ENCODE measurements at regions of chr6 and their contacts with region 1.

Region 1: DNA sequence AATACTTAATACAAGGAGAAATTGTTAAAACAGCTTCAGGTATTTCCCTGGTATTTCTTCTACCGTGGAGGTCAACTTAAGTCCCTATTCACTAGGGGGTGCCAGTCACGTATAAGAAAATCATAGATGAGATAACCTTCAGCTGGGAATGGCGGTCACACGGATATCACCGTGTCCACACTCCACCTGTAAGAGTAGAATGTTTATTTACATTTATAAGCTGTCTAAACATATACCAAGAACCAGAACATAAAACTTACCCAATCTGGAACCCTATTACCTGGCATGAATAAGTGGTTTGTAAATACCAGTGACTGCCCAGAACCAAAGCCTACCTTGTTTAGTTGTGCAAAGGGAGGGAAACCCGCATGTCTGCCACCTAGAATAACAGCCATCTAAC is 1.9 kb upstream of the ELOVL4 start:
- DNase-seq: peak in 29 of 35 experiments; percentile 16 to 88 (median 41)
- ATAC-seq: peak in 2 of 4 experiments; percentile 21 to 34
- H3K4me3 ChIP-seq: no peak overlapping the region
- H3K4me3 Mint-ChIP-seq: no peak overlapping the region
- H3K27ac ChIP-seq: no peak overlapping the region
- H3K27ac Mint-ChIP-seq: peak overlapping the region; percentile 23 to 43
- H3K4me1 ChIP-seq: peaks cover 6 to 14% of the 10 kb centered on the region in 2 experiments
- H3K4me1 Mint-ChIP-seq: peaks cover 13 to 30% (median 25%) of the 10 kb centered on the region in 3 donors
- H3K27me3 ChIP-seq: peaks cover 0 to 13% of the 10 kb centered on the region in 2 experiments
- H3K27me3 Mint-ChIP-seq: peaks cover 5 to 33% of the 10 kb centered on the region in 2 donors

Region 2: DNA sequence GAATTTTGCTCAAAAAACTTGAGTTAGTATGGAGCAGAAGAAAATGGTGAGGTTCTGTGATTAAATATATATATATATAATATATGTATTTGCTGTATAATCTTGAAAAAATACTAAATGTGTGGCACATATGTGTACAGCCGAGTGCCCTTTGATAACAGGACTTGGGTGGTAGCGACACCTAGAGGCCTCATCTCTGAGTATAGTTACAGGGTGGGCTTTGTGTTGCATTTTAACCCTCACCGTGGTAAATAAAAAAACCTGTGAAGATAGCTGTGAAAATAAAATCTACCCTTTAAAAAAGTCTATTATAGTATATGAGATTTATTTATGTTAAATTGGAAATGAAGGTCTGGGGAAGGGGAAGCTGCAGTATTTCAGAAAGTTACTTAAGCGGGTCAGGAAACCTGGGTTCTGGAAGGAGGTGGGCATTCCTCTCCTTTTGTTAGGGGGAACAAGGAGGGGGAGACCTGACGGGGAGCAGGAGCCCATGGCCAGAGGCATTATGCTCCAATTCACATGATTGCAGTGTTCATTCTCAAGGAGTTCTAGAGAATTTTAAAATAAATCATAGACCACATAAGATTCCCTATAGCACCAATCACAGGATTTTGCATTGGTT is 235.4 kb before region 1 on chr6:
- CTCF ChIA-PET with region 1: no interaction called
- POLR2A ChIA-PET with region 1: no interaction called
- DNase-seq: peak in 31 of 35 experiments; percentile 2 to 67 (median 37)
- ATAC-seq: peak in 3 of 4 experiments; percentile 53 to 69 (median 67)
- H3K4me3 ChIP-seq: no peak overlapping the region
- H3K4me3 Mint-ChIP-seq: no peak overlapping the region
- H3K27ac ChIP-seq: no peak overlapping the region
- H3K27ac Mint-ChIP-seq: no peak overlapping the region
- H3K4me1 ChIP-seq: no peaks in the 10 kb centered on the region
- H3K4me1 Mint-ChIP-seq: peaks cover 0 to 7% (median 0%) of the 10 kb centered on the region in 3 donors
- H3K27me3 ChIP-seq: peaks cover 0 to 6% of the 10 kb centered on the region in 2 experiments
- H3K27me3 Mint-ChIP-seq: peaks cover 0 to 5% of the 10 kb centered on the region in 2 donors

Region 3: DNA sequence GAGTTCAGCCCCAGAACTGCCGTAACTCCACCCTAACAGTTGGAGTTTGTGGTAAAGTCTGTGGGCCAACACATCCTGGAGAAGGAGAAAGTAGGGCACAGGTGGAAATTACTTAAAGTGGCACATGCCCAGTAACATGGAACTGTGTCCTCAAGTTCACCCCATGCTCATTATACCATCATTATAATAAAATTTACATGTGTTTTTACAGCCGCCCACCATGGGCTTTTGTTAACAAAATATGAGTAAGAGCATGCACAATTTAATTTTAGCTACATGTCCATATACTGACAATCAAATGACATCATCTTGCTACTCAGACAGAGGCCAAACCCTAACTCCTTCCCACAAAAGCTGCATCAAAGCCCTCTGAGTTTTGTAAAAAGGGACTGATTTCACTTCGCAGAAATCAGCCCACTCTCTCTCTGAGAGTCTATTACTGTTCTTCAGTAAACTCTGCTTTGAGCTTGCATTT is 15.4 kb after region 1 on chr6:
- CTCF ChIA-PET with region 1: interaction called, 4 to 10 read pairs
- POLR2A ChIA-PET with region 1: interaction called in 1 of 2 experiments, 3 read pairs
- DNase-seq: peak in 6 of 35 experiments; percentile 1 to 43 (median 12)
- ATAC-seq: peak in 2 of 4 experiments; percentile 74 to 81
- H3K4me3 ChIP-seq: no peak overlapping the region
- H3K4me3 Mint-ChIP-seq: no peak overlapping the region
- H3K27ac ChIP-seq: peak overlapping the region; percentile 61
- H3K27ac Mint-ChIP-seq: peak overlapping the region; percentile 64 to 69
- H3K4me1 ChIP-seq: peaks cover 3 to 5% of the 10 kb centered on the region in 2 experiments
- H3K4me1 Mint-ChIP-seq: peaks cover 0 to 15% (median 8%) of the 10 kb centered on the region in 3 donors
- H3K27me3 ChIP-seq: peaks cover 0 to 4% of the 10 kb centered on the region in 2 experiments
- H3K27me3 Mint-ChIP-seq: peaks cover 0 to 14% of the 10 kb centered on the region in 2 donors

Region 4: GRCh38 chr6:80004173-80005072 is 55.2 kb after region 1 on chr6 and contains the start of gene TTK:
- CTCF ChIA-PET with region 1: interaction called, 8 to 23 read pairs
- POLR2A ChIA-PET with region 1: interaction called in 1 of 2 experiments, 4 read pairs
- DNase-seq: peak; percentile 82 to 96 (median 91)
- ATAC-seq: peak; percentile 98 to 100 (median 99)
- H3K4me3 ChIP-seq: peak within 1 kb of the TSS; percentile 81 to 86
- H3K4me3 Mint-ChIP-seq: peak within 1 kb of the TSS; percentile 89 to 98 (median 92)
- H3K27ac ChIP-seq: peak within 1 kb of the TSS; percentile 96
- H3K27ac Mint-ChIP-seq: peak within 1 kb of the TSS; percentile 95 to 96
- H3K4me1 ChIP-seq: peaks cover 10 to 16% of the 10 kb centered on the region in 2 experiments
- H3K4me1 Mint-ChIP-seq: peaks cover 20 to 23% (median 20%) of the 10 kb centered on the region in 3 donors
- H3K27me3 ChIP-seq: no peaks in the 10 kb centered on the region
- H3K27me3 Mint-ChIP-seq: peaks cover 0 to 7% of the 10 kb centered on the region in 2 donors
- total RNA-seq, gene TTK: 0.38 to 1.2 (median 0.55) TPM

Region 5: GRCh38 chr6:80094017-80094416 is 144.8 kb after region 1 on chr6:
- CTCF ChIA-PET with region 1: interaction called, 21 to 35 read pairs
- POLR2A ChIA-PET with region 1: no interaction called
- DNase-seq: peak in 4 of 35 experiments; percentile 2 to 52 (median 6)
- ATAC-seq: no peak
- H3K4me3 ChIP-seq: no peak overlapping the region
- H3K4me3 Mint-ChIP-seq: no peak overlapping the region
- H3K27ac ChIP-seq: no peak overlapping the region
- H3K27ac Mint-ChIP-seq: no peak overlapping the region
- H3K4me1 ChIP-seq: no peaks in the 10 kb centered on the region
- H3K4me1 Mint-ChIP-seq: peaks cover 0 to 6% (median 5%) of the 10 kb centered on the region in 3 donors
- H3K27me3 ChIP-seq: no peaks in the 10 kb centered on the region
- H3K27me3 Mint-ChIP-seq: peaks cover 0 to 3% of the 10 kb centered on the region in 2 donors

Region 6: GRCh38 chr6:80106418-80107235 is 157.4 kb after region 1 on chr6 and contains the start of gene BCKDHB:
- CTCF ChIA-PET with region 1: interaction called, 7 to 16 read pairs
- POLR2A ChIA-PET with region 1: no interaction called
- DNase-seq: peak; percentile 92 to 99 (median 97)
- ATAC-seq: peak; percentile 96 to 98 (median 98)
- H3K4me3 ChIP-seq: peak within 1 kb of the TSS; percentile 83 to 85
- H3K4me3 Mint-ChIP-seq: peak within 1 kb of the TSS; percentile 85 to 90 (median 89)
- H3K27ac ChIP-seq: peak within 1 kb of the TSS; percentile 54
- H3K27ac Mint-ChIP-seq: peak within 1 kb of the TSS; percentile 89 to 98
- H3K4me1 ChIP-seq: peaks cover 5 to 8% of the 10 kb centered on the region in 2 experiments
- H3K4me1 Mint-ChIP-seq: peaks cover 25 to 28% (median 25%) of the 10 kb centered on the region in 3 donors
- H3K27me3 ChIP-seq: no peaks in the 10 kb centered on the region
- H3K27me3 Mint-ChIP-seq: peaks cover 12 to 14% of the 10 kb centered on the region in 2 donors
- total RNA-seq, gene BCKDHB: 14.1 to 18.7 (median 15.2) TPM

Measured in T-cell (primary cell).